Activated B cell treated with CpG ODN at 0.5 μM for 24 hours (primary cell): ENCODE measurements at regions of chr1 and their contacts with region 1.

Region 1: DNA sequence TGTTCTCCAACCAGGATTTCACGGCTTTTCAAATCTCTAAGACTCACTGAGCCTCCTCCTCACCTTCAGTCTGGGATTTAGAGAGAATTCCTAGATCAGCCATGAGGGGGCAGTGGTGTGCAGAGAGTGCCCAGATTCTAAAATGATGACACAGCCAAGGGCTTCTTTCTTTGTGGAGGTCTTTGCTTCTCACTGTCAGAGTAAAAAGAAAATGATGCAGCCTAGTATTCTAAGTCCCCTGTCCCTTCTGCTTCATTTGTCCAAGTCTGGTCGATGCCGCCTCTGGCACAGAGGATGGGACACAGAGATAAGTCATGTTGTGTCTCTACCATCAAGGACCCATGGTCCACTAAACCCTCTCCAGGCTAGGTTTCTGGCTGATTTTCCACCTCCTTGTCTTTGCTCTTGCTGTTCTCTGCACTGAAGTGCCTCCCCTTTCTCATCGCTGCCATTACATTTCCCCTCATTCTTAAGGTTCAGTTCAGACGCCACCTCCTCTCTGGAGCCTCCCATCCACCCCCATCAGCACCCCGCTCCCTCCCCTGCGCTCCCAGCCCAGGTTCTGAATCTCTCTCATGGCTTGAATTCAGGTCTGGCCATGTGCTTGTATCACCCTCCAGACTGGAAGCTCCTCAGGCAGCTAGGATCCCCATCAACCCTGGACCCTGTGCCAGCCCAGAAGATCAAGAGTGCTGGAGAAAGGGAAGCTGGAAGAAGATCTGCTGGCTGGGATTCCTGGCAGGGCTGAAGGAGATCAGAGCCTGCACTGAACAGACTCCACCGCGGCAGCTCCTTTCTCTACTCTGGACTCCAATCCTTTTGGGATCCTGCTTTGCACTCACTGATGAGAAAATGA is 12.0 kb upstream of the TINAGL1 start:
- DNase-seq: no peak
- ATAC-seq: peak; percentile 84
- H3K4me3 Mint-ChIP-seq: no peak overlapping the region
- H3K27ac Mint-ChIP-seq: no peak overlapping the region
- H3K4me1 Mint-ChIP-seq: no peaks in the 10 kb centered on the region
- H3K27me3 Mint-ChIP-seq: peaks cover 32% of the 10 kb centered on the region
- CTCF ChIP-seq: peak; percentile 22

Region 2: GRCh38 chr1:31593770-31594632 is 29.6 kb after region 1 on chr1:
- CTCF ChIA-PET with region 1: interaction called, 3 read pairs
- POLR2A ChIA-PET with region 1: no interaction called
- intact Hi-C with region 1: loop called (anchors 1 kb)
- DNase-seq: peak; percentile 45
- ATAC-seq: peak; percentile 96
- H3K4me3 Mint-ChIP-seq: no peak overlapping the region
- H3K27ac Mint-ChIP-seq: no peak overlapping the region
- H3K4me1 Mint-ChIP-seq: peaks cover 14% of the 10 kb centered on the region
- H3K27me3 Mint-ChIP-seq: peaks cover 16% of the 10 kb centered on the region
- CTCF ChIP-seq: no peak

Region 3: GRCh38 chr1:31617917-31618660 is 53.7 kb after region 1 on chr1:
- CTCF ChIA-PET with region 1: interaction called, 47 read pairs
- POLR2A ChIA-PET with region 1: no interaction called
- intact Hi-C with region 1: loop called (anchors 1 kb)
- DNase-seq: peak; percentile 67
- ATAC-seq: peak; percentile 85
- H3K4me3 Mint-ChIP-seq: peak overlapping the region; percentile 56
- H3K27ac Mint-ChIP-seq: no peak overlapping the region
- H3K4me1 Mint-ChIP-seq: peaks cover 19% of the 10 kb centered on the region
- H3K27me3 Mint-ChIP-seq: peaks cover 20% of the 10 kb centered on the region
- CTCF ChIP-seq: no peak

Region 4: DNA sequence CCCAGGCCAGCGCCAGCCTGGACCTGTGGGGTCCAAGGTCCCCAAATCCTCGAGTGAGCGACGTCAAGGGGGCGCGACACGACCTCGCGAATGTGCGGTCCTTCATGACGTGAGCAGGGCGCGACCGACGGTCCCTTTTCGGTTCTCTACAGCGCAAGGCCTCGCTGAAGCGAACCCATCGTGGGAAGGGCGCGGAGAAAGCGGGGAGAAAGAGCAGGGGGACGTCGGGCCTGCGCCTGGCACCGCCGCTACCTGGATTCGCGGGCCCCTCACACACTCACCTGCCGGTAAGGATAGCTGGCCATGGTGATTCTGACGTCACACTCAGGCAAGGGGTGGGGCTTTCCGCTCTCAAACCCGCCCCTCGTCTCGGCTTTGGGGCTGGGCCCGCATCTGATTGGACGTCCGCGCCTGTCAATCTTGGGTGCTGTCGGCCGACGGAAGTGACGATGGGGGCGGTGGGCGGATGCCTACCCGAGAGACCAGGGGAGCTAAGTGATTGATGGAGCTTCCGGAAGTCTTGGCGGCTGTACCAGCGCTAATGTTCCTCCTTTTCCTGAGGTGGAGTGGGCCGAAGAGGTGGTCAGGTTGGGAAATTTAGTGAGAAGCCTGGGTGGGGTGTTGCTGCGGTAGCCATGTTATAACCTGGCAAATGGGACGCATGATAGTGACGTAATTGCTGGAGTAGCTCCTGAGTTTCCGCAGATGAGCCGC is 80.4 kb after region 1 on chr1 and contains the start of gene PEF1:
- CTCF ChIA-PET with region 1: interaction called, 3 read pairs
- POLR2A ChIA-PET with region 1: no interaction called
- intact Hi-C with region 1: loop called (anchors 2 kb)
- DNase-seq: peak; percentile 98
- ATAC-seq: peak; percentile 90
- H3K4me3 Mint-ChIP-seq: peak within 1 kb of the TSS; percentile 100
- H3K27ac Mint-ChIP-seq: peak within 1 kb of the TSS; percentile 100
- H3K4me1 Mint-ChIP-seq: peaks cover 32% of the 10 kb centered on the region
- H3K27me3 Mint-ChIP-seq: no peaks in the 10 kb centered on the region
- CTCF ChIP-seq: no peak
- total RNA-seq, gene PEF1: 58.0 and 61.1 TPM in 2 replicates